ENCODE measurements at regions of chr21 and their contacts with region 1.

Region 1: DNA sequence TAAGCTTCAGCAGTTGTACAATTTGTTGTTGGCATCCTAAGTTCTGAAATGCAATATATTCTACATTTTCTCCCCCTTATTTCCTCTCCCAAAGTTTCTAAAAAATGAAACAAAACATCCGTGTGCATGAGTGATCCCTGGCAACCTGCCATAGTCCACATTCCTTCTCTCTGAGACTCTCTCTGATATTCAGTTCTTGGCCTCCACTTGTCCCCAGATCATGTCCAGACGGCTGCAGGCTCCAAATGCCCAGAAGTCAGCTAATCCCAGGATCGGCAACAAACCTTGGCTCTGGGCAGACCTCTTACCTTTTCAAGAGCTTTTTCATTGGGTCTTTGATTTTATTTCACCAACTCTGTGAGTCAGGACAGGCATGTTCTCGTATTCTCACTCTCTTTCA is 187.8 kb downstream of the ETS2 start:
- DNase-seq: peak; percentile 93
- H3K4me3 ChIP-seq: peak overlapping the region in 1 of 3 experiments; percentile 51
- H3K27ac ChIP-seq: peak overlapping the region; percentile 94
- H3K4me1 ChIP-seq: peaks cover 58% of the 10 kb centered on the region
- H3K27me3 ChIP-seq: no peaks in the 10 kb centered on the region
- CTCF ChIP-seq: no peak
- POLR2A ChIP-seq: no peak

Region 2: DNA sequence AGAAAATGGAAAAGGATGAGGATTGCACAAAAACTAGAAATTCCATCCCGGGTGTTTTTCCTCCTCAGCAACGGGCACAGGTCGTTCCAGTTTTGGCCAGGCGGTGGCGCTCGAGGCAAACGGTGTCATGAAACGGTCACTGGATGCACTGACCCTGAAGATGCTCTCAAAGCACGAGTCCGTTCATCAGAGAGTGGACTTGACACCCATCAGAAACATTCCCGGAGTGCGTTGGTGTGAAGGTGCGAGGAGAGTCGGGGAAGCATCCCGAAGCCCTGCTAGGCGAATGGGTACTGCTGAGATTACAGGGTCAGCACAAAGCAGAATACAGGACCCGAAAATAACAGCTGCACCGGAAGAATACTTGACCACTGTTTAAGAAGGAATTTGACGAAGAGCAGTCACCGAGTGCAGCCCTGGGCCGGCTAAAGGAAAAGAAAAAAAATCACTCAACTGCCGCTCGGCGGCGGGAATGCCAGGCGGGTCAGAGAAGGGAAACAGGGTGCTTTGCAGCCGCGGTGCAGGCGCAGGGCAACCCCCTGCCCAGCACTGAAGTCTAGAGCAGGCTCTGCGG is 259.5 kb before region 1 on chr21:
- CTCF ChIA-PET with region 1: interaction called, 3 read pairs
- POLR2A ChIA-PET with region 1: no interaction called
- dilution Hi-C with region 1: no loop called
- intact Hi-C with region 1: loop called (anchors 5 kb)
- DNase-seq: peak; percentile 87
- H3K4me3 ChIP-seq: peak overlapping the region in 2 of 3 experiments; percentile 1 to 31
- H3K27ac ChIP-seq: no peak overlapping the region
- H3K4me1 ChIP-seq: peaks cover 9% of the 10 kb centered on the region
- H3K27me3 ChIP-seq: peaks cover 3% of the 10 kb centered on the region in 2 experiments
- CTCF ChIP-seq: peak; percentile 91 to 94
- POLR2A ChIP-seq: no peak

Region 3: DNA sequence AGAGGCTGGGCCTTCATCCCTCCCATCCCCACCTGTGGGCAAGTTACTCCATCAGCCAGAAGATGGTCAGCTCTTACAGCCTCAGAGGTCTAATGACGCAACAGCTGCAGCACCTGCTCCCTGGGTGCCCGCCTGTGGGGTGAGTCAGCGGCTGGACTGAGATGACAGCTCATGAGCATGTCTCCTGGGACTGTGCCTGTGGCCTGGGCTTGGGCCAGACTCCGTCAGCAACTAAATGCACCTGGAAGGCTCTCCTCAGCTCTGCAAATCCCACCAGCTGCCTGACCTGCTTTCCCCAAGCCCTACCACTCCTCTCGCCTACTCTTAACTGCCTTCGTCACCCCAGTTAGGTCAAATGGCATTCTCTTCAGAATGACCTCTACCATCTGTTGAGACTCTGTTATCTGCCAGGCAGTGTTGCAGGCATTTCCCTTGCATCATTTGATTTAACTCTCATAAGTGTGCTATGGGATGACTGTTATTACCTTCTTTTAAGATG is 140.1 kb before region 1 on chr21:
- CTCF ChIA-PET with region 1: no interaction called
- POLR2A ChIA-PET with region 1: no interaction called
- dilution Hi-C with region 1: no loop called
- intact Hi-C with region 1: loop called (anchors 1 kb)
- DNase-seq: peak; percentile 88
- H3K4me3 ChIP-seq: no peak overlapping the region
- H3K27ac ChIP-seq: peak overlapping the region; percentile 73
- H3K4me1 ChIP-seq: peaks cover 41% of the 10 kb centered on the region
- H3K27me3 ChIP-seq: no peaks in the 10 kb centered on the region
- CTCF ChIP-seq: no peak
- POLR2A ChIP-seq: no peak

Region 4: GRCh38 chr21:38970765-38971164 is 22.8 kb before region 1 on chr21:
- CTCF ChIA-PET with region 1: interaction called, 3 read pairs
- POLR2A ChIA-PET with region 1: no interaction called
- dilution Hi-C with region 1: no loop called
- intact Hi-C with region 1: loop called (anchors 1 kb)
- DNase-seq: peak; percentile 29
- H3K4me3 ChIP-seq: no peak overlapping the region
- H3K27ac ChIP-seq: peak overlapping the region; percentile 25
- H3K4me1 ChIP-seq: peaks cover 15% of the 10 kb centered on the region
- H3K27me3 ChIP-seq: no peaks in the 10 kb centered on the region
- CTCF ChIP-seq: no peak
- POLR2A ChIP-seq: no peak

Region 5: GRCh38 chr21:39040494-39041110 is 47.0 kb after region 1 on chr21:
- CTCF ChIA-PET with region 1: interaction called, 5 read pairs
- POLR2A ChIA-PET with region 1: no interaction called
- dilution Hi-C with region 1: no loop called
- intact Hi-C with region 1: loop called (anchors 1 kb)
- DNase-seq: peak; percentile 63
- H3K4me3 ChIP-seq: peak overlapping the region in 1 of 3 experiments; percentile 26
- H3K27ac ChIP-seq: peak overlapping the region; percentile 39
- H3K4me1 ChIP-seq: peaks cover 28% of the 10 kb centered on the region
- H3K27me3 ChIP-seq: no peaks in the 10 kb centered on the region
- CTCF ChIP-seq: no peak
- POLR2A ChIP-seq: no peak

Region 6: DNA sequence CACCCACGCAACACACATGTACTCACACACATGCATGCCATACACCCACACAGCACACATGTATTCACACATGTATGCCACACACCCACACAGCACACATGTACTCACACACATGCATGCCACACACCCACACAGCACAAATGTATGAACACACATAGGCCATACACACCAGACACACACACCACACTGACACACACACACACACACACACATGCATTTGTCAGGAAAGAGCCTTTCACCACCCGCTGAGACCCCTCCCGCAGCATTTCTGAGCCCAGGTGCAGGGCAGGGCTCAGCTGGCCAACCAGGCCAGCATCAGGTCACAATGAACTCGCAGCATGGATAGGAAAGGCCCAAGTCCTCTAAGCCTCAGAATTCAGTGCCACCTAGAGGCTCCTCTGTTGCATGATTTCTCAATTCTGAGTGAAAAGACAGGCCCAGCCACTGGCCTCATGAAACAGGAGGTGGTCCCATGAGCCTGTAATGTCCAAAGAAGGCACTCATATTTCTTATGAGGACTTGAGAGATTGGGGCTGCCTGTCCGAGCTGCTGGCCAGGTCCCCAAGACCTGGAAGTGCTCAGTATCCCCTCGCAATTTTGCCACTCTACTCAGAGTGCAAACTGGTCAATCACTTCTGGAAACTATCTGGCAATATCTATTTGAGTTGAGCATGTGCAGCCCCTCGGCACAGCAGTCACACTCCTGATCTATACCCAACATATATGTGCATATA is 132.4 kb after region 1 on chr21:
- CTCF ChIA-PET with region 1: interaction called, 5 read pairs
- POLR2A ChIA-PET with region 1: no interaction called
- dilution Hi-C with region 1: no loop called
- intact Hi-C with region 1: loop called (anchors 5 kb)
- DNase-seq: peak; percentile 68
- H3K4me3 ChIP-seq: no peak overlapping the region
- H3K27ac ChIP-seq: no peak overlapping the region
- H3K4me1 ChIP-seq: no peaks in the 10 kb centered on the region
- H3K27me3 ChIP-seq: peaks cover 0 to 2% of the 10 kb centered on the region in 2 experiments
- CTCF ChIP-seq: peak; percentile 51 to 73
- POLR2A ChIP-seq: no peak

Region 7: GRCh38 chr21:39217356-39218081 is 224.0 kb after region 1 on chr21:
- CTCF ChIA-PET with region 1: no interaction called
- POLR2A ChIA-PET with region 1: no interaction called
- dilution Hi-C with region 1: no loop called
- intact Hi-C with region 1: no loop called
- DNase-seq: no peak
- H3K4me3 ChIP-seq: no peak overlapping the region
- H3K27ac ChIP-seq: no peak overlapping the region
- H3K4me1 ChIP-seq: no peaks in the 10 kb centered on the region
- H3K27me3 ChIP-seq: no peaks in the 10 kb centered on the region
- CTCF ChIP-seq: no peak
- POLR2A ChIP-seq: no peak